Heart right ventricle (tissue), 16 donors: ENCODE measurements at regions of chr1 and their contacts with region 1.

Region 1: GRCh38 chr1:84753516-84754385 is 63.5 kb upstream of the SSX2IP start:
- DNase-seq: peak; percentile 24 to 62
- ATAC-seq: peak; percentile 71 to 93 (median 90)
- H3K4me3 ChIP-seq: no peak overlapping the region
- H3K27ac ChIP-seq: no peak overlapping the region
- H3K4me1 ChIP-seq: peaks cover 0 to 10% (median under 1%) of the 10 kb centered on the region in 9 donors
- H3K27me3 ChIP-seq: peaks cover 0 to 10% (median 0%) of the 10 kb centered on the region in 7 donors
- CTCF ChIP-seq: peak; percentile 72 to 96 (median 88)

Region 2: DNA sequence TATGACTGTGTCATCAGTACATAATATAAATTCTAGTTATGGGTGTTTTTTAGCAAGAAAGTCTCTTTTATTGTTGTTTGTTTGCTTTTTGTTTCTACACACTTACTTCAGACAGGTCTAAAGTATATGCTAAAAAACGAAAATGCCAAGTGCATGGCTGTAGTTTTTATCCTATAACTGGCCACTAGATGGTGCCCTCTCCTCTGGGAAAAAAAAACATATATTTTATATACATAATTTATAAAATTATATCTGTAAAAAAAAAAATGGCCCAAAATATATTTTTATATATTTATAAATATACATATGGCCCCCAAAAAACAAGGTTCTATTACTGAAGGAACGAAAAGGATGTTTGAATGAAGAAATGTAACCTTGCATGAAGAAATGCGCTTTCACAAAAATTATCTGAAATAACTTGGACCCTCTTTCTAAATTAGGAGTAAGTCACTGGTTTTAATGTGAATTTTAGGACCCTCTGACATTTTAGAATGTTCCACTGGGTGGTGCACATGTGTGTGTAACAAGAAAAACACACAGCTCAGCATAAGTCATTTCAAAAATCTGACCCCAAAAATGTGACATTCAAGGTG is 848.3 kb before region 1 on chr1:
- intact Hi-C with region 1: loop called in 1 of 10 experiments (anchors 10 kb)
- DNase-seq: no peak
- ATAC-seq: no peak
- H3K4me3 ChIP-seq: no peak overlapping the region
- H3K27ac ChIP-seq: no peak overlapping the region
- H3K4me1 ChIP-seq: peaks cover 0 to under 1% (median 0%) of the 10 kb centered on the region in 9 donors
- H3K27me3 ChIP-seq: no peaks in the 10 kb centered on the region
- CTCF ChIP-seq: peak; percentile 28 to 80 (median 69)

Region 3: DNA sequence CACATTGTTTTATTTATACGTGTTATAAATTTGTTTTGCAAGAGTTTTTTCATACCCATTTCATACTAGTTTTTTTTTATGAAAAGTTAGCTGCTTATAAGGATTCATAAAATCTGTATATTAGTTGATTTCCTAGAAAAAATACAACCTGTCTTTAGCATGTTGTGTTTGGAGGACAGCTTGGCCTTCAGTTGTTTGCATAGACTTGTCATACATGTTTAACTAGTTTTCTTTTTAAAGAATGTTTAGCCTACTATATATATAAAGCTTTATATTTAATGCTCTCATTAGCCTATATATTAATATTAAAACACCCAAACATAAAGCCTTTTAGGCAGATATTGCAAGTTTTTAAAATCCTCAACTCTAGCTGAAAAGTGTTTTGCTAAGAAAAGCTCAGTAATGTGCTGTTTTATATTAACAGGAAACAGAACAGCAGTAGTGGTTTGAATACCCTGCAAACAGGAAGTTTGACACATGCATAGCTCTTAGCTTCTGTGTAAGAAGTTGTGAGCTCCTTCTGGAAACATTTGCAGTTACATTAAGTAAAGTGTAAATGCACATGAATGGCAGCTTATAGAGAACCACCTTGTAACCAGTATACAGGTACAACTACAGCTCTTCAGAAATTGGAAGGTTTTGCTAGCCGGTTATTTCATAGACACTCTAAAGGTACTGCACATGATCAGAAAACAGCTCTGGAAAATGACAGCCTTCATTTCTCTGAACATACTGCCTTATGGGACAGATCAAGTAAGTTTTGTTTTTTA is 609.8 kb before region 1 on chr1 and contains the start of gene PRKACB:
- intact Hi-C with region 1: loop called in 3 of 10 experiments (anchors 10 kb)
- DNase-seq: no peak
- ATAC-seq: peak in 5 of 8 donors; percentile 28 to 58 (median 50)
- H3K4me3 ChIP-seq: peak within 1 kb of the TSS in 5 of 10 donors; percentile 6 to 50 (median 13)
- H3K27ac ChIP-seq: peak within 1 kb of the TSS in 1 of 10 donors; percentile 78
- H3K4me1 ChIP-seq: peaks cover 0 to 29% (median 0%) of the 10 kb centered on the region in 9 donors
- H3K27me3 ChIP-seq: no peaks in the 10 kb centered on the region
- CTCF ChIP-seq: no peak
- total RNA-seq, gene PRKACB: 28.4 to 49.1 (median 43.0) TPM

Region 4: GRCh38 chr1:84620720-84621313 is 132.9 kb before region 1 on chr1:
- intact Hi-C with region 1: loop called in 5 of 10 experiments (anchors 10 kb)
- DNase-seq: peak; percentile 65 to 79
- ATAC-seq: peak; percentile 93 to 97 (median 94)
- H3K4me3 ChIP-seq: peak overlapping the region; percentile 39 to 84 (median 67)
- H3K27ac ChIP-seq: peak overlapping the region in 7 of 10 donors; percentile 14 to 80 (median 59)
- H3K4me1 ChIP-seq: peaks cover 0 to 26% (median 5%) of the 10 kb centered on the region in 9 donors
- H3K27me3 ChIP-seq: no peaks in the 10 kb centered on the region
- CTCF ChIP-seq: peak; percentile 93 to 99 (median 97)

Region 5: GRCh38 chr1:84644472-84644871 is 109.3 kb before region 1 on chr1:
- intact Hi-C with region 1: no loop called
- DNase-seq: no peak
- ATAC-seq: no peak
- H3K4me3 ChIP-seq: no peak overlapping the region
- H3K27ac ChIP-seq: no peak overlapping the region
- H3K4me1 ChIP-seq: peaks cover 0 to 8% (median 0%) of the 10 kb centered on the region in 9 donors
- H3K27me3 ChIP-seq: no peaks in the 10 kb centered on the region
- CTCF ChIP-seq: no peak

Region 6: GRCh38 chr1:84668185-84668584 is 85.6 kb before region 1 on chr1:
- intact Hi-C with region 1: loop called in 1 of 10 experiments (anchors 10 kb)
- DNase-seq: no peak
- ATAC-seq: no peak
- H3K4me3 ChIP-seq: no peak overlapping the region
- H3K27ac ChIP-seq: no peak overlapping the region
- H3K4me1 ChIP-seq: no peaks in the 10 kb centered on the region
- H3K27me3 ChIP-seq: no peaks in the 10 kb centered on the region
- CTCF ChIP-seq: peak in 4 of 9 donors; percentile 21 to 34 (median 28)